ENCODE measurements at regions of chr5 and their contacts with region 1.

Region 1: DNA sequence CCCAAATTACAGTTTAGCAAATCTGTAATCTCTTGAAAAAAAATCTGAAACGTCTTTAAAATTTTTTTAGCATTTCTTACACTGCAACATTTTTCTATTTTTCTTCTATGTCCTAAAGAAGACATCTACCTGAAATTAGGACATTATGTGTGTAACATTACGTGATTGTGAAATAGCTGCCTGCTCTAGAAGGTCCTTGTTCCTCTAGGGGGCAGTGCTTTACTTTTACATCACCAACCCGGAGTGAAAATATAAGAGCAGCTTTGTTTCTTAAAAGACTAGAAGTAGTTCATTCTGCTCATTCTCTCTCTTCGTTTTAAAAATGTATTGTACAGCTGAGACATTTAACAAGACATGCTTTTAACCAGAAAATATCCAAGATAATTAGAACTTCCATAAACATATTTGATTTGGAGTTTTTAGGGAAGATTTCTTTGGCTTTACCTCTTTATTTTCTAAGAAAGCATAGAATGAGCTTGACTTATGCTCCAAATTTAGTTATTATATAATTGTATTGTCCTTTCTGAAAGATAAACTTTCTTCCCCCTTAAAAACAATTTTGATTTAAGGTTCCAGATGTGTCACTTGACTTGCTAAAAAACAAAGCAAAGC is 48.1 kb upstream of the RIOK2 start:
- DNase-seq: peak; percentile 8
- H3K4me3 Mint-ChIP-seq: no peak overlapping the region
- H3K27ac Mint-ChIP-seq: no peak overlapping the region
- H3K4me1 Mint-ChIP-seq: no peaks in the 10 kb centered on the region
- H3K27me3 Mint-ChIP-seq: peaks cover 2% of the 10 kb centered on the region

Region 2: GRCh38 chr5:97534166-97534565 is 303.0 kb after region 1 on chr5:
- intact Hi-C with region 1: loop called (anchors 2 kb)
- DNase-seq: no peak
- H3K4me3 Mint-ChIP-seq: no peak overlapping the region
- H3K27ac Mint-ChIP-seq: no peak overlapping the region
- H3K4me1 Mint-ChIP-seq: no peaks in the 10 kb centered on the region
- H3K27me3 Mint-ChIP-seq: peaks cover 2% of the 10 kb centered on the region

Region 3: DNA sequence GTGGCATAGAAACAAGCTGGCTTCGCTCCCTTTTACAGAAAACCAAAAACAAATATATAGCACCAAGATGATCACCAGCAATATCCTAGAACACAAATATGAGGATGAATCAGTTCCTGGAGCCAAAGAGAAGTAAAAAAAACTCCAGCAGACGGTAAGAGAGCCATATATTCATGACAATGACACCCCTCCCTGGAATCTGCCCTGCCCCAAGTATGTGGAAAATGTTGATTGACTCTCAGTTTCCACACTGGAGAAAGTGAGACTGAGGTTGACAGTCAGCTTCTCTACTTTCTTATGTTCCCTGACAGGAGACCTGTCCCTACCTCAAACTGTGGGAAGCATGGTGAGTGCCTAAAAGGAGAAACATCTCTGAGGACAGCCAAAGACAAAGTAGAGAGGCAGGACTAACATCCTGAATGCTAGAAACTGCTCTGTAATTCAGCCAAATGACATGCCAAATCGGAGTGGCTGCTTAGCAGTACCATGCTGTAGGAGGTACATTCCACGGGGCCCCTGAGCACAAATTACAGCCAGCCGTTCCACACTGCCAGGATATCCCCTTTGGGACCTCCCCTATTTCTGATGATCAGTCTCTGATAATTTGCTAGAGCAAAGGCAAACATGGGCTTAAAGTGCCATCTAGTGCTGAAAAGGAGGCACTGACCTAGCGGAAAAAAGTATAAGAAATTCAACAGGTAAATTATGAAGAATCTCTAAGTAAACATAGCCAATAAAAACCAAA is 1118.3 kb after region 1 on chr5:
- intact Hi-C with region 1: loop called (anchors 2 kb)
- DNase-seq: no peak
- H3K4me3 Mint-ChIP-seq: no peak overlapping the region
- H3K27ac Mint-ChIP-seq: no peak overlapping the region
- H3K4me1 Mint-ChIP-seq: no peaks in the 10 kb centered on the region
- H3K27me3 Mint-ChIP-seq: no peaks in the 10 kb centered on the region

Region 4: GRCh38 chr5:98796197-98796972 is 1565.3 kb after region 1 on chr5:
- intact Hi-C with region 1: loop called (anchors 1 kb)
- DNase-seq: peak; percentile 8
- H3K4me3 Mint-ChIP-seq: no peak overlapping the region
- H3K27ac Mint-ChIP-seq: no peak overlapping the region
- H3K4me1 Mint-ChIP-seq: no peaks in the 10 kb centered on the region
- H3K27me3 Mint-ChIP-seq: peaks cover 6% of the 10 kb centered on the region

Measured in activated T-helper 1 cell treated with anti-CD3 and anti-CD28 coated beads, Interleukin-12 subunit alpha, Interleukin-12 subunit beta, Interleukin-2, Interleukin-4 antibody, amounts not matched to agents 30 ng/mL and 10 ng/mL and 1 ng/mL, durations not matched to agents 14 hours and 24 hours and 36 hours (primary cell).